ENCODE measurements at regions of chr5 and their contacts with region 1.

Region 1: DNA sequence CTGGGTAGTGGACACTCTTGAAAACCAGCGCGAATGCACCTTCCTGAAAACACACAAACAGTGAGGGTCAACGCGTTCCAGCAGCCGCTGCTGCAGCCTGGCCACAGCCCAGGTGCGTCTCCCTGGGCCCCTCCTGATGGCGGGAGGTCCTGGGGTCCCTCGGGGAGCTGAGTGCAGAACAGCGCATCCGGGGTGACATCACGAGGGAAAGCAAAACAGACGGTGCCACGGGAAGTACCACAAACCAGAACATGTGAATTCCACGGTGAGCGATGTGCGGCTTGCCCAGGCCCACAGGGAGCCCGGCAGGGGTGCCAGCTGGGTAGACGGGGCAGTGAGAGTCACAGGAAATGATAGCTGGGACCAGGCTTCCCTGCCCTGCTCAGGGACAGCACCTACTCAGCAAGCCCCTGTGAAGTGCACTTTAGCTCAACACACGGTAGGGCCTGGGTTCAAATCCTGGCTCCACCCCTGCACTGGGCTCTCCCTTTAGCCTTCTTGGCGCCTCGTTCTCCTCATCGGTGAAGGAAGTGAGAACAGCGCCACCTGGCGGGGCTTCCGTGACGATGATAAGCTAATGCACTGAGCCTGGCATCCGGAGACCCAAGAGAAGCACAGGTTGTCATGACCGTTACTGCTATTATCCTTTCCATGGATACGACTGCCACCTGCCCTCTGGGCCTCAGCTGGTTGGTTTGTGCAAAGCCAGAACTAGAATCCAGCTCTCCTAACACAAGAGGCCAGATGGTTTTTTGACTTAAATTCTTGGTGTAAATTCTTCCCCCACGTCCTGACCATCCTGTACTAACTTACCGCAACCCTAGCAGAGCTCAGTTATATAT is 24.6 kb downstream of the GFPT2 start:
- DNase-seq: peak; percentile 88 to 89
- ATAC-seq: peak; percentile 48 to 72; a peak in 5 of 6 replicates
- H3K4me3 ChIP-seq: no peak overlapping the region
- H3K27ac ChIP-seq: peak overlapping the region; percentile 75 to 86; a peak in 5 of 6 replicates
- H3K4me1 ChIP-seq: peaks cover 60% of the 10 kb centered on the region
- CTCF ChIP-seq: peak; percentile 89
- EP300 ChIP-seq: no peak
- POLR2A ChIP-seq: no peak
- RAD21 ChIP-seq: peak; percentile 71 to 74

Region 2: DNA sequence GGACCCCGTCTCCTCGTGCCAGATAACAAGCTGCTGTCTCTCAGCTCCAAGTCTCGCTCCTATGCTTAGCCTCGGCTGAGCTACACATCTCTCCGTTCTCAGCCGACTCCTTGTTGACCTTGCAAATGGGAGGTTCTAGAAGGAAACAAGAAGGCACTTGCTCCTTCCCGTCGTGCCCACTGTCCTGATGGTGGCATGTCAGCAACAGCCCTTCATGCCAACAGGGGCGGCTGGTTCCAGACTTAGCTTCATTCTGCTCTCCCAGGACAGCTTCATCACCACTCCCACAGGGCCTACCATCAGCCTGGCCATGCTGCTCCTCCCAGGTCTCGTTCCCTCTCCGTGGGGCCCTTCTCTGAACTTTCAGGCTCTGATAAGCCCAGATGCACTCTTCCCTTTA is 106.5 kb before region 1 on chr5:
- CTCF ChIA-PET with region 1: no interaction called
- POLR2A ChIA-PET with region 1: no interaction called
- DNase-seq: no peak
- ATAC-seq: no peak
- H3K4me3 ChIP-seq: no peak overlapping the region
- H3K27ac ChIP-seq: no peak overlapping the region
- H3K4me1 ChIP-seq: no peaks in the 10 kb centered on the region
- CTCF ChIP-seq: no peak
- EP300 ChIP-seq: no peak
- POLR2A ChIP-seq: no peak
- RAD21 ChIP-seq: no peak

Region 3: DNA sequence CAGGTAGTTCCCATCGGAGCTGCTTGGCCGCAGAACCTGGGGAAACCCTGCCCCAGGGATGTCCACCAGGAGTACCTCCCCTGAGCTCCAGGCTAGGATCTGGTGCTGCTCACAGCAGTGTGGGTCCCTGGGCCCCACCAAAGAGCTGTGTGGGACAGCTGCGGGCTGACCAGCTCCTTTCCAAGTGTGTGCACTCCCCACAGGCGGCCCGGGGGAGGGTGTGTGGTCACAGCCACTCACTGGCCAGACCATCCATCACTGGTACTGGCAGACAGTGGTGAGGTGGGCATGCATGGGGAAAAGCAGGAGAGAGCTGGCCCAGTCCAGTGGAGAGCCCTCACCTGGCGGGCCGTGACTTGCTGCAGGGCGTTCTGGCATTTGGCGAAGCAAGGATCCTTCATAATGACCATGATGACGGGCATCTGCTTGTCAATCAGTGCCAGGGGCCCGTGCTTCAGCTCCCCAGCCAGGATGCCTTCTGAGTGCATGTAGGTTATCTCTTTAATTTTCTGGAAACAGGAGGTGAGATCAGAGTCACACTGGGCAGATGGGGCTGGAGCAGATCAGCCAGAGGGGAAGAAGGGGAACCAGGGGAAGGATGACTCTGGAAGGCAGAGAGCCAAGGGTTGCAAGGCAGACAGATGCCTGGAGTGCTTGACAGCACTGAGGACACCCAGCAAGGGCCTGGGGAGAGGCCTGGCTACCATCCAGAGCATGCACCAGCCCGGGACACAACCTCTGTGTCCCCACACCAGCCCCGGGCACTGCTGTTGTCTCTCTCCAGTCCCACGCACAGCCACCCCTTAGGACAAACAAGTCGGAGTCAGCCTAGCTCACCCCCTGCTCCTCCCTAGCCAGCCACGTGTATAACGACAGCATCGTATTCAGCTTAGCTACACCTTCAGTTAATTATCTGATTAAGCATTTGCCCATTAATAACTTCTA is 23.8 kb before region 1 on chr5:
- CTCF ChIA-PET with region 1: interaction called, 36 read pairs
- POLR2A ChIA-PET with region 1: no interaction called
- DNase-seq: no peak
- ATAC-seq: no peak; a peak in 1 of 6 replicates
- H3K4me3 ChIP-seq: no peak overlapping the region
- H3K27ac ChIP-seq: no peak overlapping the region
- H3K4me1 ChIP-seq: no peaks in the 10 kb centered on the region
- CTCF ChIP-seq: no peak
- EP300 ChIP-seq: no peak
- POLR2A ChIP-seq: no peak
- RAD21 ChIP-seq: no peak

Region 4: GRCh38 chr5:180343831-180344327 is 15.4 kb after region 1 on chr5:
- CTCF ChIA-PET with region 1: interaction called, 45 read pairs
- POLR2A ChIA-PET with region 1: no interaction called
- DNase-seq: peak in 1 of 2 experiments; percentile 41
- ATAC-seq: peak; percentile 37 to 54; a peak in 3 of 6 replicates
- H3K4me3 ChIP-seq: no peak overlapping the region
- H3K27ac ChIP-seq: peak overlapping the region; percentile 37 to 71; a peak in 4 of 6 replicates
- H3K4me1 ChIP-seq: peaks cover 35% of the 10 kb centered on the region
- CTCF ChIP-seq: no peak
- EP300 ChIP-seq: no peak
- POLR2A ChIP-seq: no peak
- RAD21 ChIP-seq: no peak

Region 5: GRCh38 chr5:180358179-180358578 is 29.7 kb after region 1 on chr5:
- CTCF ChIA-PET with region 1: interaction called, 13 read pairs
- POLR2A ChIA-PET with region 1: interaction called, 4 read pairs
- DNase-seq: no peak
- ATAC-seq: no peak
- H3K4me3 ChIP-seq: no peak overlapping the region
- H3K27ac ChIP-seq: 0 out of 6 replicates have a peak overlapping the region, but pooled peaks of 1 of the 2 experiments have one; percentile 34
- H3K4me1 ChIP-seq: peaks cover 13% of the 10 kb centered on the region; the same call in 2 of the 3 replicates
- CTCF ChIP-seq: no peak
- EP300 ChIP-seq: no peak
- POLR2A ChIP-seq: no peak
- RAD21 ChIP-seq: no peak

Measured in A549 (cell line).